A549 (cell line): ENCODE measurements at regions of chr2 and their contacts with region 1.

Region 1: GRCh38 chr2:225668606-225669266 is 269.2 kb downstream of the NYAP2 start:
- DNase-seq: peak; percentile 47 to 75
- ATAC-seq: peak; percentile 93 to 95
- H3K4me3 ChIP-seq: no peak overlapping the region
- H3K27ac ChIP-seq: no peak overlapping the region
- H3K4me1 ChIP-seq: no peaks in the 10 kb centered on the region
- CTCF ChIP-seq: peak; percentile 82
- EP300 ChIP-seq: no peak
- POLR2A ChIP-seq: no peak
- RAD21 ChIP-seq: peak; percentile 85 to 89

Region 2: DNA sequence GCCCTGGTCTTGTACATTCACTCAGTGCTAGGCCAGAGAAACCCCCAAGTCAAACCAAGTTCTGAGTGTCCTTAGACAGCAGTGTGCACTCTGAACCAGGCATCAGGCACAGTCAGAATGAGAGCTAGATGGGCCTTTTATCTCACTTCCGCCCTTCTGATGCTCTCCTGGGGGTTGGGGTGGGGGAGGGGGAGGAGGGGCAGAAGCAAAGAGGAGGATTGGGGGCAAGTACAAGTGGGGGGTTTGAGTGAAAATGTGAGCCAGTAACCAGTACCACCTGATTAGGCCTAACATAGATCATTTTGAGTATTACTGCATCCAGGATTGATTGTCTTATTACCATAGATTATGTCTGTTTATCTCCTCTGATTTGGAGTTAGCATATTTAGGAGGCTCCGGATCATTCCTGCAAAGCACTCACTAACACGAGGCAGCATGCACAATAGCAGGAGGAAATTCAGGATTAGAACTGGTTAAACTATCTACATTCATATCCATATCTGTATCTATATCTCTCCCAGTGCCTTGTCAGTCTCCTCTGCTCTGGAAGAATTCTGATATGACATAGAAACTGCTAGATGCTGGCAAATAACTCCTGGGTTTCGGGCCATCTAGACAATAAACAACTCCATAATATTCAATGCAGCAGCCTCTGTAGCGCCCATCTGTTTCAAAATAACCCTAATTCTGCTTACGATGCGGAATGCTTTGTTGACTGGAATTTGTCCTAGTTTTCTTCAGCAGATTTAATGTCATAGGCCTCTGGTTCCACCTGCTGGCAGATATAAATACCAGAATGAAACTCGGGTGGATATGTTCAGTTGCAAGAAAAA is 1316.2 kb after region 1 on chr2:
- CTCF ChIA-PET with region 1: interaction called, 16 read pairs
- POLR2A ChIA-PET with region 1: no interaction called
- DNase-seq: peak; percentile 45 to 66
- ATAC-seq: peak; percentile 78 to 88; a peak in 4 of 6 replicates
- H3K4me3 ChIP-seq: no peak overlapping the region
- H3K27ac ChIP-seq: peak overlapping the region in 1 of 2 experiments; percentile 8; a peak in 1 of 6 replicates
- H3K4me1 ChIP-seq: 0 out of 3 replicates have a peak, but pooled peaks cover 2% of the 10 kb centered on the region
- CTCF ChIP-seq: peak; percentile 89
- EP300 ChIP-seq: no peak
- POLR2A ChIP-seq: no peak
- RAD21 ChIP-seq: peak; percentile 91